Activated CD8-positive, alpha-beta memory T cell treated with anti-CD3 and anti-CD28 coated beads, Interleukin-2, amount 10 ng/mL, durations not matched to agents 7 days and 5 days (primary cell): ENCODE measurements at regions of chr9 and their contacts with region 1.

Region 1: GRCh38 chr9:36102742-36103495 is 33.6 kb upstream of the GLIPR2 start:
- DNase-seq: peak; percentile 91
- ATAC-seq: peak; percentile 100
- H3K4me3 Mint-ChIP-seq: no peak overlapping the region
- H3K27ac Mint-ChIP-seq: no peak overlapping the region
- H3K4me1 Mint-ChIP-seq: peaks cover 7% of the 10 kb centered on the region
- H3K27me3 Mint-ChIP-seq: no peaks in the 10 kb centered on the region

Region 2: GRCh38 chr9:36092509-36093215 is 10.3 kb before region 1 on chr9:
- CTCF ChIA-PET with region 1: interaction called, 19 read pairs
- DNase-seq: peak; percentile 82
- ATAC-seq: peak; percentile 100
- H3K4me3 Mint-ChIP-seq: peak overlapping the region; percentile 10
- H3K27ac Mint-ChIP-seq: peak overlapping the region; percentile 90
- H3K4me1 Mint-ChIP-seq: peaks cover 17% of the 10 kb centered on the region
- H3K27me3 Mint-ChIP-seq: peaks cover under 1% of the 10 kb centered on the region

Region 3: DNA sequence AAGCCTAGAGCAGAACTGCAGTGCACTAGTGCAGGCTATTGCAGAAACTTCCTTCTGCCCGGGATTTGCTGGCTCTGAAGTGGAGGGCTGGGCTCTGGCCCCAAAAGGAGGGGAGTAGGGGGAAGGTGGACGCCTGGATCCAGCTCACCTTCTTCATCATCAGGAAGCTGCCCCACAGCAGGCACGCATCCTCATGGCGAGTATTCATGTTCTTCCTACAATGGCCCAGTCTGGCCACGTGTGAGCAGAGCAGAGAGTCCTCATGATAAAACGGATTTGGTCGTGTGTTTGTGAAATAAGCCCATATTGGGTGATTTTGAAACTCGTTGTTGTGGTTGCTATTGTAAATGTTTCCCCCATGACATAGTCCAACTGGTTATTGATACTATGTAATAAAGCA is 25.4 kb after region 1 on chr9:
- CTCF ChIA-PET with region 1: interaction called, 15 read pairs
- DNase-seq: no peak
- ATAC-seq: no peak
- H3K4me3 Mint-ChIP-seq: no peak overlapping the region
- H3K27ac Mint-ChIP-seq: peak overlapping the region; percentile 53
- H3K4me1 Mint-ChIP-seq: peaks cover 22% of the 10 kb centered on the region
- H3K27me3 Mint-ChIP-seq: peaks cover 4% of the 10 kb centered on the region

Region 4: GRCh38 chr9:36142510-36143244 is 39.8 kb after region 1 on chr9:
- CTCF ChIA-PET with region 1: interaction called, 16 read pairs
- DNase-seq: no peak
- ATAC-seq: peak; percentile 10
- H3K4me3 Mint-ChIP-seq: peak overlapping the region; percentile 77
- H3K27ac Mint-ChIP-seq: peak overlapping the region; percentile 94
- H3K4me1 Mint-ChIP-seq: peaks cover 93% of the 10 kb centered on the region
- H3K27me3 Mint-ChIP-seq: no peaks in the 10 kb centered on the region

Region 5: GRCh38 chr9:36166101-36166927 is 63.4 kb after region 1 on chr9:
- CTCF ChIA-PET with region 1: interaction called, 295 read pairs
- DNase-seq: peak; percentile 88
- ATAC-seq: peak; percentile 98
- H3K4me3 Mint-ChIP-seq: peak overlapping the region; percentile 64
- H3K27ac Mint-ChIP-seq: peak overlapping the region; percentile 46
- H3K4me1 Mint-ChIP-seq: peaks cover 7% of the 10 kb centered on the region
- H3K27me3 Mint-ChIP-seq: peaks cover 25% of the 10 kb centered on the region